ENCODE measurements at regions of chr6 and their contacts with region 1.

Region 1: GRCh38 chr6:166402582-166403277 is 20.0 kb upstream of the MPC1 start:
- DNase-seq: no peak
- ATAC-seq: no peak

Region 2: GRCh38 chr6:166167801-166168615 is 234.7 kb before region 1 on chr6 and contains the start of gene TBXT:
- intact Hi-C with region 1: loop called (anchors 10 kb)
- DNase-seq: no peak
- ATAC-seq: no peak
- total RNA-seq, gene TBXT: not detected

Region 3: DNA sequence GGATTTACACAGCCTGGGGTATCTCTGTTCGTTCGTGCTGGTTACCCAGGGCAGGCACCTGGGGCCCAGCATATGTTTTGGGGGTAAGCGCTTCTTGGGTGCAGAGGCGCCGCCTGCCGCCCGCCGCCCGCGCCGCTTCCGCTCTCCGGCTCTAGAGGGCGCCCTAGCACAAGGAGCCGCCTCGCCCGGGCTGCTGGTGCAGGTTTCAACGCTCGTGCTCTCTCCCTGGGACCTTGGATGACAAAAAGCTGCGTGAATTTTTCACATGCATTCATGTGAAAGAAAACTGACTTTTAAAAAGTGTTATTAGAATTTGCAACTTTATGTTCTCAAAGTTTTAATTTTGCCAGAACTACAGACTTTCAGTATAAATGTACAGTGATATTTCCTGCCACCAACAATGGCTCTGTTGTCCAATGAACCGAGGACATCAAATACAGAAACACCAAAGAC is 127.0 kb before region 1 on chr6:
- intact Hi-C with region 1: loop called (anchors 2 kb)
- DNase-seq: peak; percentile 86
- ATAC-seq: peak; percentile 96

Region 4: DNA sequence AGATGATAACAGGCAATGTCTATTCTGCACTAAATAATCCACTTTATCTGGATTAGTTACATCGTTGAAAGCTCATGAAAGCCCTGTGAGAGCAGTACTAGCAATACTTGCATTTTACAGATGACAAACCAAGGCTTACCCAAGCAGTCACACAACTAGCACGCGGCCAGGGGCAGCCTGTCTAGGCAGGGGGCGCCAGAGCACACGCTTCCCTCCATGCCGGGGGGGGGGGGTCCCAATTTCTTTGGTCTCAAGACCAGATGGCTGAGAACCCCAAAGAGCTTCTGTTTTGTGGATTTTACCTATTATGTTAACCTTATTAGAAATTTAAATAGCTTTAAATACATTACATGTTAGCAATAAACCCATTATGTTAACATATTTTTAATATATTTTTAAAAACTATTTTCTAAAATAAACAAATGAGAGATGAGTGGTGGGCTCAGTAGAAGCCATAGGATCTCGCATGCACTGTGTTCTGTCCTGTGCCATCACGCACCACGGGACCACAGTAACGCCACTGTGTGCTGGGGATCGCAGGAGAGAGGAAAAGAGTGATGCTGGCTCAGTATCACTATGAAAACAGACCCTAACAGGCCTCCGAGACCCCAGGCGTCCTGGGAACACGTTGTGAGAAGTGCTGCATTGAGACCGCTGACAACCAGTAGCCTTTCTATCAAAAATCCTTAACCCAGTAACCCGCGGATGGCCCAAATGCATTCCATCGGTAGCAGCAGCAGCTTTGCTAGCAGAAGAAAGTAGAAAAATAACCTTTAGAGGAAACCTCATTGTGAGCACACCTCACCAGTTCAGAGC is 89.3 kb before region 1 on chr6:
- intact Hi-C with region 1: loop called (anchors 5 kb)
- DNase-seq: peak; percentile 68
- ATAC-seq: peak; percentile 78